Naive thymus-derived CD8-positive, alpha-beta T cell (primary cell): ENCODE measurements at regions of chr5 and their contacts with region 1.

Region 1: GRCh38 chr5:6632917-6633468 is at the starts of genes NSUN2 and SRD5A1:
- DNase-seq: peak; percentile 84 to 98 (median 93)
- ATAC-seq: peak; percentile 88 to 89
- H3K4me3 Mint-ChIP-seq: peak within 1 kb of the TSS; percentile 90 to 98 (median 94)
- H3K27ac Mint-ChIP-seq: peak within 1 kb of the TSS; percentile 92 to 99 (median 97)
- H3K4me1 Mint-ChIP-seq: peaks cover 20 to 57% (median 51%) of the 10 kb centered on the region in 4 donors
- H3K27me3 Mint-ChIP-seq: peaks cover 0 to 6% (median 0%) of the 10 kb centered on the region in 5 donors
- polyA plus RNA-seq, gene NSUN2: 18.3 to 48.7 (median 27.8) TPM
- polyA plus RNA-seq, gene SRD5A1: 4.3 to 6.8 (median 4.4) TPM

Region 2: GRCh38 chr5:6712577-6713275 is 79.7 kb after region 1 on chr5:
- POLR2A ChIA-PET with region 1: interaction called, 18 read pairs
- DNase-seq: peak in 9 of 10 donors; percentile 95 to 99 (median 97)
- ATAC-seq: peak; percentile 70 to 78
- H3K4me3 Mint-ChIP-seq: peak overlapping the region; percentile 83 to 92 (median 89)
- H3K27ac Mint-ChIP-seq: peak overlapping the region; percentile 72 to 97 (median 94)
- H3K4me1 Mint-ChIP-seq: peaks cover 21 to 37% (median 34%) of the 10 kb centered on the region in 4 donors
- H3K27me3 Mint-ChIP-seq: no peaks in the 10 kb centered on the region